Activated B cell treated with CpG ODN at 0.5 μM for 24 hours (primary cell): ENCODE measurements at regions of chr11 and their contacts with region 1.

Region 1: DNA sequence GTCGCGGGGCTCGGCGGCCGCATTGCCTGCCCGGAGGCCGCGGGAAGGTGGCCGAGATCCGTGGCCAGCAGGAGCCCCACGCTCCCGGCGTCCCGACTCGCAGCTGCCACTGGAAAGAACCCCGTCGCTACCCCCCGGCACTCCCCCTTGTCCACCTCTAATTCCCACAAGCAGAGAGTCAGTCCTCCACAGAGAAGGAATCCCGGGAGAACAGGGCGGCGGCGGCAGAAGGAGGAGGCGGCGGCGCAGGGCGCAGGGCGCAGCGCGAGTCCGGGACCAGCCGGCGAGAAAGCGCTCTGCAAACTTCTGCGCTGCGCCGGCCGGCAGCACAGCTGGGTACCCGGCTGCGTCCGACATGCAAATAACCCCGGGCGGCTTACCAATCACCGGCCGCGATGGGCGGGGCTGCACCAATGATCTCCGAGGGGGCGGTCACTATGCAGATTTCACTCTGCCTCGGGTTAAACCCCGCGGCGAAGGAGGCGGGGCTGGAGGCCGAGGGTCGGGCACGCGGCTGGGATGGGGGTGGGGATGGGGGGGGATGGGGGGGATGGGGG is at the start of gene ABTB2:
- DNase-seq: peak; percentile 94
- ATAC-seq: peak; percentile 87
- H3K4me3 Mint-ChIP-seq: peak within 1 kb of the TSS; percentile 88
- H3K27ac Mint-ChIP-seq: peak within 1 kb of the TSS; percentile 86
- H3K4me1 Mint-ChIP-seq: peaks cover 39% of the 10 kb centered on the region
- H3K27me3 Mint-ChIP-seq: peaks cover 17% of the 10 kb centered on the region
- CTCF ChIP-seq: no peak
- total RNA-seq, gene ABTB2: 68.6 and 73.0 TPM in 2 replicates

Region 2: DNA sequence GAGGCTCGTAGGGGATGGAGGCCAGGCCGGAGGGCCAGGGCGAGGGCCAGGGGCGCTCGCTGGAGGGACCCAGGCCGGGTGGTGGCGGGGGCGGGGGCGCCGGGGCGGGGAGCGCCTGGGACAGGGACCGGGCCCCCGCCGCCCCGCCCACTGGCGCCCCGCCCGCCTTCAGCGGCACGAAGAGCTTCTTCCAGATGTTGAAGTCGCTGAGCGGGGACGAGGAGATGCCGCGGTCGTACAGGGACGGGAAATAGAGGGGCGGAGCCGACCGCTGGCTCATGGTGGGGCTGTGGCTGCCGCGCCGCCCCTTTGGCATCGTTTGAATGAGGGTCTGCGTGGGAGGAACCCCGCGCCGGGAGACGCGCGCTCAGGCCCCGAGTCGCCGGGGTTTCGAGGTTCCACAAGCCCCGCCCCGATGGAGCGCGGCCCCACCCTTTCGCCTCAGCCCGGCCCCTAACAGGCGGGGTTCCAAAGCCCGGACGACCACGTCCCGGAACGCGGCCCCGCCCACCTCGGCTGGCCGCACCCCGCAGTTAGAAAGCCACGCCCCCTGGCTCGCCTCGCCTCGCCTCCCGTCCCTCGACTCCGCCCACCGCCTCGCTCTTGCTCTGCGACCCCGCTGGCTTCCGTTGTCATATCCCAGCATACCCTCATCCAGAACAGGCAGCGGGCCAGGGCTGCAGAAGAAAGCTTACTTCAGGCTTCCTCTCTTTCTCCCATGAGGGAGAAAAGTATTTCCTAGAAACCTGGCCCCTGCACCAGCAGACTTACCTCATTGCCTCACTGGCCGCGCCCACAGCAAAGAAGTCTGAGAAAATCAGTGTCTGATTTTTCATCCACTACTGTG is 657.1 kb before region 1 on chr11 and contains the start of gene C11orf91:
- CTCF ChIA-PET with region 1: no interaction called
- POLR2A ChIA-PET with region 1: no interaction called
- intact Hi-C with region 1: loop called (anchors 1 kb)
- DNase-seq: peak; percentile 97
- ATAC-seq: peak; percentile 98
- H3K4me3 Mint-ChIP-seq: peak within 1 kb of the TSS; percentile 91
- H3K27ac Mint-ChIP-seq: peak within 1 kb of the TSS; percentile 47
- H3K4me1 Mint-ChIP-seq: peaks cover 13% of the 10 kb centered on the region
- H3K27me3 Mint-ChIP-seq: peaks cover 2% of the 10 kb centered on the region
- CTCF ChIP-seq: no peak
- total RNA-seq, gene C11orf91: 0.49 TPM in 1 of 2 replicates, not detected in the other

Region 3: DNA sequence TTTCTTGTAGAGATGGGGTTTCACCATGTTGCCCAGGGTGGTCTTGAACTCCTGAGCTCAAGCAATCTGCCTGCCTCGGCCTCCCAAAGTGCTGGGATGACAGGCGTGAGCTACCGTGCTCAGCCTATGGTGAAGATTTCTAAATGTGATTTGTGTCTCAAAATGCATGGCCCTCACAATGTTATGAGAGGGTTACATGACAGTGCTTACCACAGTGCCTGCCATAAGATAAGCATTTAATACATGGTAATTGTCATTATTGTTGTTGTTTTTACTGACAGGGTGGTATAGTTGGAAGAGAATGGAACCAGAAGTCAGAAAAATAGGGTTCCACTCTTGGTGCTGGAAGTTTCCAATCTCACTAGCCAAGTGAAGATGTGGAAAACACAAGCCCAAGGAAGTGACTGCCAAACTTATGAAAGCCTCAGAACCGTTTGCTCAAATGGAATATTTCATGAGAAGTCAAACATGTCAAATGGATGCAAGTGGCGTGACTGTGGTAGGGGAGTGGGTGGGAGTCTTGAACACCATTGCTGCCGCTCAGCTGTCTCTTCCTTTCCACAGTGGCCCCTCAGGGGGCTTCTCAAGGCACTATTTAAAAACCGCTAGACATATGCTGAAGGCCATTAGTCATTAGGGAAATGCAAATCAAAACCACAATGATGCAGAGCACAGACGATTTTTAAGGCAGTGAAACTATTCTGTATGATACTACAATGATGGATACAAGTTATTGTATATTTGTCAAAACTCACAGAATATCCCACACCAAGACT is 436.8 kb before region 1 on chr11:
- CTCF ChIA-PET with region 1: no interaction called
- POLR2A ChIA-PET with region 1: no interaction called
- intact Hi-C with region 1: loop called (anchors 2 kb)
- DNase-seq: peak; percentile 44
- ATAC-seq: peak; percentile 97
- H3K4me3 Mint-ChIP-seq: peak overlapping the region; percentile 47
- H3K27ac Mint-ChIP-seq: peak overlapping the region; percentile 70
- H3K4me1 Mint-ChIP-seq: peaks cover 26% of the 10 kb centered on the region
- H3K27me3 Mint-ChIP-seq: peaks cover 28% of the 10 kb centered on the region
- CTCF ChIP-seq: no peak

Region 4: GRCh38 chr11:34105079-34105956 is 252.5 kb before region 1 on chr11 and contains the start of gene NAT10:
- CTCF ChIA-PET with region 1: interaction called, 3 read pairs
- POLR2A ChIA-PET with region 1: interaction called, 24 read pairs
- intact Hi-C with region 1: loop called (anchors 1 kb)
- DNase-seq: peak; percentile 91
- ATAC-seq: peak; percentile 92
- H3K4me3 Mint-ChIP-seq: peak within 1 kb of the TSS; percentile 97
- H3K27ac Mint-ChIP-seq: peak within 1 kb of the TSS; percentile 98
- H3K4me1 Mint-ChIP-seq: peaks cover 41% of the 10 kb centered on the region
- H3K27me3 Mint-ChIP-seq: peaks cover 2% of the 10 kb centered on the region
- CTCF ChIP-seq: no peak
- total RNA-seq, gene NAT10: 107 and 120 TPM in 2 replicates

Region 5: DNA sequence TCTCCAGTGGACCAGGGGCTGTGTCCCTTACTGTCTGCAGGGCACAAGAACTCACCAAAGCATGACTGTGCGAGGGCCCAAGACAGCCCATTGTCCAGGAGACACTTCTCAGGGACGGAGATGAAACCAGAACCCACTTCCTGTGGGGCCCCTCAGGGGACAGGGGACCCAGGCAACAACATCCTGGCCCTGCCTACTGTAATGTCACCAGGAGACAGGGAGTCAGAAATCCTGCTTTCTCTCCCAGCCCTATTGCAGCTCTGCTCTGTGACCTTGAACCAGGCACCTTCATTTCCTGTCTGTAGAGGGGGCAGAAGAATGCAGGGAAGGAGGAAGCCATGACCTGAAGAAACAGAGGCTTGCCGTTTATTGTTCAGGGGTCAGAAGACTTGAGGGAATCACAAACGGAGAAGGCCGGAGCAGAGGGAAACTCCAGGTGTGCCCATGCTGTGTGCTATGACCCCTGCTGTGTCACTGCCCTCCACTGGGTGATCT is 154.4 kb before region 1 on chr11:
- CTCF ChIA-PET with region 1: interaction called, 3 read pairs
- POLR2A ChIA-PET with region 1: interaction called, 5 read pairs
- intact Hi-C with region 1: loop called (anchors 1 kb)
- DNase-seq: no peak
- ATAC-seq: no peak
- H3K4me3 Mint-ChIP-seq: no peak overlapping the region
- H3K27ac Mint-ChIP-seq: no peak overlapping the region
- H3K4me1 Mint-ChIP-seq: peaks cover 30% of the 10 kb centered on the region
- H3K27me3 Mint-ChIP-seq: no peaks in the 10 kb centered on the region
- CTCF ChIP-seq: no peak

Region 6: GRCh38 chr11:34344768-34345539 is 12.8 kb before region 1 on chr11:
- CTCF ChIA-PET with region 1: no interaction called
- POLR2A ChIA-PET with region 1: interaction called, 10 read pairs
- intact Hi-C with region 1: no loop called
- DNase-seq: no peak
- ATAC-seq: no peak
- H3K4me3 Mint-ChIP-seq: no peak overlapping the region
- H3K27ac Mint-ChIP-seq: no peak overlapping the region
- H3K4me1 Mint-ChIP-seq: peaks cover 1% of the 10 kb centered on the region
- H3K27me3 Mint-ChIP-seq: no peaks in the 10 kb centered on the region
- CTCF ChIP-seq: no peak